ENCODE measurements at regions of chr10 and their contacts with region 1.

Region 1: GRCh38 chr10:70221030-70221429 is 12.2 kb downstream of the PPA1 start:
- DNase-seq: no peak
- H3K4me3 ChIP-seq: peak overlapping the region in 11 of 59 donors; percentile 2 to 38 (median 12)
- H3K27ac ChIP-seq: peak overlapping the region in 40 of 59 donors; percentile 1 to 76 (median 48)
- H3K27me3 ChIP-seq: no peaks in the 10 kb centered on the region
- CTCF ChIP-seq: no peak

Region 2: DNA sequence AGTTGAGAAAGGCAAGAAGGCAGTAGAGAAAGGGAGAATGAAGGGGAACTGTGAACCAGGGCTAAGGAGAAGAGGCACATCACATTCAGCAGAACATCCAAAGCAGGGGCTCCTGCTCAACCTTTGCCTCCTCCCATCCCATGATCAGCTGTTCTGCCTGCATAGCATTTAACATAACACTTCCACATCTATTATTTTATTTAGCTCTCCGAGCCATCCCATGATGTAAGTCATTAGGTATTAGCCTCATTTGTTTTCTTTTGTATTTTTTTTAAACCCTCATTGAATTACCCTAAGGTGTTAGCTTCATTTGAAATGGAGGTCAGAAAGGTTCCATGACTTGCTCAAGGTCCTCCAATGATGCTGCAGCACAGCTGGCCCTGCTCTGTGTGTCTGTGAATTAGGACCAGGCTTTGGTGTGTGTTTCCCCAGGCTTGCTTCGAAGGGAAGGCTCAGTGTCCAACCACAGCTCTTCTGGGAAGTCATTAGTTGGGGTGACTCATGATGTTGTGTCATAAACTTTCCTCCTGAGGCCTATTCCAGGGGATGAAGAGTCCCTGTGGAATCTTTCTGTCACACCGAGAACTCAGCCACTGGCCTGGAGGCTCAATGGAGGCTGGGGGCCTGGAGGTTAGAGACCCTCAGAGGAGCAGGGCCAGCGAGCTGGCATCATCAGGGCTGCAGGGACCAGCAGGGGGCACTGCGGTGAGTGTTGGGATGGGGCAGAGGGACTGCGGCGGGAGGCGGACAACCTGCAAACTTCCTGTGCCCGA is 46.3 kb after region 1 on chr10:
- intact Hi-C with region 1: loop called in 1 of 2 experiments (anchors 5 kb)
- DNase-seq: no peak
- H3K4me3 ChIP-seq: no peak overlapping the region
- H3K27ac ChIP-seq: no peak overlapping the region
- H3K27me3 ChIP-seq: peaks cover 0 to 3% (median 0%) of the 10 kb centered on the region in 45 donors
- CTCF ChIP-seq: peak in 3 of 56 donors; percentile 6 to 13 (median 9)

Region 3: GRCh38 chr10:70283445-70284399 is 62.7 kb after region 1 on chr10 and contains the start of gene NPFFR1:
- intact Hi-C with region 1: no loop called
- DNase-seq: no peak
- H3K4me3 ChIP-seq: peak within 1 kb of the TSS; percentile 15 to 63 (median 46)
- H3K27ac ChIP-seq: peak within 1 kb of the TSS in 2 of 59 donors; percentile 28 to 36
- H3K27me3 ChIP-seq: peaks cover 0 to 54% (median 23%) of the 10 kb centered on the region in 45 donors
- CTCF ChIP-seq: no peak
- total RNA-seq, gene NPFFR1: 0.64 to 5.9 (median 2.1) TPM

Region 4: GRCh38 chr10:70302292-70302691 is 81.3 kb after region 1 on chr10:
- intact Hi-C with region 1: no loop called
- DNase-seq: no peak
- H3K4me3 ChIP-seq: no peak overlapping the region
- H3K27ac ChIP-seq: peak overlapping the region in 1 of 59 donors; percentile 4
- H3K27me3 ChIP-seq: no peaks in the 10 kb centered on the region
- CTCF ChIP-seq: no peak

Measured in dorsolateral prefrontal cortex (tissue), 120 donors.